Upper lobe of right lung (tissue), 1 donor: ENCODE measurements at regions of chr7 and their contacts with region 1.

Region 1: GRCh38 chr7:16071246-16071857 is 350.0 kb downstream of the CRPPA start:
- DNase-seq: no peak
- ATAC-seq: peak; percentile 78
- H3K4me3 ChIP-seq: no peak overlapping the region
- H3K27ac ChIP-seq: no peak overlapping the region
- H3K4me1 ChIP-seq: peaks cover 14% of the 10 kb centered on the region
- H3K27me3 ChIP-seq: no peaks in the 10 kb centered on the region
- CTCF ChIP-seq: peak; percentile 80

Region 2: GRCh38 chr7:16564909-16565426 is 493.6 kb after region 1 on chr7:
- intact Hi-C with region 1: loop called (anchors 10 kb)
- DNase-seq: no peak
- ATAC-seq: peak; percentile 84
- H3K4me3 ChIP-seq: no peak overlapping the region
- H3K27ac ChIP-seq: no peak overlapping the region
- H3K4me1 ChIP-seq: no peaks in the 10 kb centered on the region
- H3K27me3 ChIP-seq: no peaks in the 10 kb centered on the region
- CTCF ChIP-seq: peak; percentile 78